ENCODE measurements at regions of chr17 and their contacts with region 1.

Region 1: DNA sequence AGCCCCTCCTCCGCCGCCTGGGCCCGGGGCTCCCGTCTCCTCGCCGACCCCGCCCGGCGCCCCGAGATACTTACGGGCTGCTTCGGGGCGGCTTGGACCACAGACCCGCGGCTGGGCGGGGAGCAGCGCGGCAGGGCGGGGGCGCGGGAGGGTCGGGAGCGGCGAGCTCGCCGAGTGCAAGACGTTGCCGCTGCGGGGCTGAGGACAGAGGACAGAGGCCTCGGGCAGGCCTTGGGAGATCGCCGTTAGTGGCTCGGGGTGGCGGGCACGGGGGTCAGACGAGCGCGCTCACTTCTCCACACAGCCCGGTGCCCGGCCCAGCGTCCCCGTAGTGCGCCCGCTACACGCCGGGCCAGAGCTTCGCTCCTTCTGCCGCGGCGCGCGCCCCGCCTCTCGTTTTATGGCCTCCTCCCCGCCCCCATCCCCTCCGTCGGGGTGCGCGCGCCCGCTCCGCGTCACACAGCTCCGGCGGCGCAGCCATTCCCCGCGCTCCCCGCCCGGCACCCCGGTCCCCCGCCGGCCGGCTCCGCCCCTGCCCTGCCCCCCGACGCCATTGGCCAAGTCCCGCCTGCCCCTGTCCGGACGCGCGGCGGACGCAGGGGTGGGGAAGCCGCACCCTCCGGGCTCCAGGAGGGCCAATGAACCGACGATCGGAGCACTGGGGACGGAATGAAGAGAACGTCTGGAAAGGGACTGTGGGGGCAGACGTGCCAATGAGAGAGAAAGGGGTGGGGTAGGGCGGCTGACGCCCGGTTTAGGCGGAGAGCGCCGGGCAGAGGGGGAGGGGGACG is at the start of gene TOB1:
- DNase-seq: peak; percentile 97 to 100
- H3K4me3 ChIP-seq: peak within 1 kb of the TSS; percentile 87 to 93
- H3K27ac ChIP-seq: peak within 1 kb of the TSS; percentile 99 to 100
- H3K4me1 ChIP-seq: peaks cover 0 to 39% (median 28%) of the 10 kb centered on the region in 4 donors
- H3K27me3 ChIP-seq: no peaks in the 10 kb centered on the region
- CTCF ChIP-seq: no peak

Region 2: DNA sequence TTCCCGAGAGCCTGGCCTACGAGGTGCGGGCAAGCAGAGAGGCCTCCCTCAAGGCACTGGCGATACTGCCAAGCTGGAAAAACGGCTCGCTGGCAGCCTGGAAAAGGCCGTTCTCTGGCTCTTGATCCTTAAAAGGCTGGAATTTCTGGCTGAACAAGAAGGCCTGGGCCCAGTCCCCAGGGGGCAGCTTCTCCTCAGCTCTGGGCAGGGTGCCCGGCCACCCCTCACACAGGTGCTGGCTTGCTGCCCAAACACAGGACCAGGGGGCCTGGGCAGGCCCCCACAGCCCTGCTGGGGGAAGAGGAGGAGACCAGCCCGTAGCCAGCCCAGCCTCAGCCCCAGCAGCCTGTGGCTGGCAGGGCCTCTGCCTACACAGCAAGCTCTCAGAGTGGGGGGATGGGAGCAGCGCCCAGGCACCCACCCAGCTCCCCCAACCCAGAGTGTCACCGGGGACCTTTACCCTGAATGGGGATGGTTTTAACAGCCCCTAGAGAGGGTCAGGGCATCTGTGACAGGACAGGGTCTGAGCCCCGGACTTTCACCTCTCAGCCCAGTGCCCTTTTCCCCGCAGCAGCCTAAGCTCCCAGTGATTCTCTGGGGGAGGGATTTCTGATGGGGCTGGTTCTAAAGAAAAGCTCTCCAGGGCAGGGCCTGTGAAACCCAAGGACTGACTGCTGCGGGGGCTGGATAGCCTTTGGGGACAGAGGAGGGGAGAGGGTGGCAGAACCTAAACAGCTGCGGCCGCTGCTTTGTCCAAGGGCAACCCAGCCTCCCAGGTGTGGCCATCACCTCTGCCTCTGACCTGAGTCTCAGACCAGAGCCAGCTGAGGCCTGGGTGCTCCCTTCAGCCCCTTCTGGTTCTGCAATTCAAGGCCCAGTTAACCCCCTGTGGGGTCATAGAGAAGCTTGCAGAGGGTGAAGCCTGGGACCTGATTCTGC is 38.6 kb after region 1 on chr17:
- intact Hi-C with region 1: loop called (anchors 2 kb)
- DNase-seq: peak; percentile 61 to 97
- H3K4me3 ChIP-seq: no peak overlapping the region
- H3K27ac ChIP-seq: peak overlapping the region; percentile 92 to 96
- H3K4me1 ChIP-seq: peaks cover 6 to 44% (median 33%) of the 10 kb centered on the region in 4 donors
- H3K27me3 ChIP-seq: no peaks in the 10 kb centered on the region
- CTCF ChIP-seq: no peak